ENCODE measurements at regions of chr1 and their contacts with region 1.

Region 1: DNA sequence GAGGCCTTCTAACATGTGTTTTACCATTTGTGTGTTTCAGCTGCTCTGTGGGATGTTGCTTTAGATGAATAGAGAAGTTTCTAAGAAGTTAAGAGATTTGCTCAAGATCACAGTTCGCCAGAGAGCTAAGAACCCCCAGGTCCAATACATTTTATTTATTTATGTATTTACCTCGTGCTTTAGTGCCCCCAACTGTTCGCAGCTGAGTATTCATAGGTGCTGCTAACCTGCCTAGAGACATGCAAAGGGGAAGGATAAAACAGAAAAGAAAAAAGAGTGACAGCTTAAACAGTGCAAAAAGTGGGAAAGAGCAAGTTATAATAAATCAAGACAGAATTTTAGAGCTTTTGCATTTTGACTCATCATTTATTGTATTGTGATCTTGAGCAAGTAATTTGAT is 31.1 kb downstream of the NFYC start:
- DNase-seq: no peak
- CTCF ChIP-seq: peak; percentile 22

Region 2: GRCh38 chr1:40709100-40709801 is 13.4 kb before region 1 on chr1:
- CTCF ChIA-PET with region 1: interaction called, 12 read pairs
- POLR2A ChIA-PET with region 1: no interaction called
- DNase-seq: peak; percentile 79
- CTCF ChIP-seq: no peak

Region 3: GRCh38 chr1:40736085-40736531 is 13.5 kb after region 1 on chr1:
- CTCF ChIA-PET with region 1: interaction called, 36 read pairs
- POLR2A ChIA-PET with region 1: no interaction called
- DNase-seq: no peak
- CTCF ChIP-seq: no peak

Measured in GM10248 (cell line).